ENCODE measurements at regions of chr2 and their contacts with region 1.

Region 1: DNA sequence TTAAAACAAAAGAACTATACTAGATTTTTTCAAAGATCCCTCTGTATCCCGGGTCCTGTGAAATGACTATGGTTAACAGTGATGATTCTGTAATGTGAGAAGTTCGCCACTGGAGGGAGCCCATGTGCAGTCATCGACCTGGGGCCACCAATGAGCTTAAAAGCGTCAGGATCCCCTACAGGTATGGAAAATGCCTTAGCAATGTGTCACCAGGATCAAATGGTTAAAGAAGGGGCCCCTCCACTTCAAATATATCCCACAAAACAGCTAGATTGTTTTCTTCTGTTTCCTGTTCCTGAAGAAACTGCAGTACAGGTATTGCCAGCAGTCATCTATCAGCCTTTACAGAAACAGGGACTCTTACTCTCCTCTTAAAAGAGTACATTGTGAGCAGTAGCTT is 15.3 kb downstream of the CHRNA1 start:
- DNase-seq: peak; percentile 85
- ATAC-seq: peak; percentile 33
- H3K4me3 Mint-ChIP-seq: no peak overlapping the region
- H3K27ac Mint-ChIP-seq: no peak overlapping the region
- H3K4me1 Mint-ChIP-seq: peaks cover 39% of the 10 kb centered on the region
- H3K27me3 Mint-ChIP-seq: peaks cover 2% of the 10 kb centered on the region

Region 2: DNA sequence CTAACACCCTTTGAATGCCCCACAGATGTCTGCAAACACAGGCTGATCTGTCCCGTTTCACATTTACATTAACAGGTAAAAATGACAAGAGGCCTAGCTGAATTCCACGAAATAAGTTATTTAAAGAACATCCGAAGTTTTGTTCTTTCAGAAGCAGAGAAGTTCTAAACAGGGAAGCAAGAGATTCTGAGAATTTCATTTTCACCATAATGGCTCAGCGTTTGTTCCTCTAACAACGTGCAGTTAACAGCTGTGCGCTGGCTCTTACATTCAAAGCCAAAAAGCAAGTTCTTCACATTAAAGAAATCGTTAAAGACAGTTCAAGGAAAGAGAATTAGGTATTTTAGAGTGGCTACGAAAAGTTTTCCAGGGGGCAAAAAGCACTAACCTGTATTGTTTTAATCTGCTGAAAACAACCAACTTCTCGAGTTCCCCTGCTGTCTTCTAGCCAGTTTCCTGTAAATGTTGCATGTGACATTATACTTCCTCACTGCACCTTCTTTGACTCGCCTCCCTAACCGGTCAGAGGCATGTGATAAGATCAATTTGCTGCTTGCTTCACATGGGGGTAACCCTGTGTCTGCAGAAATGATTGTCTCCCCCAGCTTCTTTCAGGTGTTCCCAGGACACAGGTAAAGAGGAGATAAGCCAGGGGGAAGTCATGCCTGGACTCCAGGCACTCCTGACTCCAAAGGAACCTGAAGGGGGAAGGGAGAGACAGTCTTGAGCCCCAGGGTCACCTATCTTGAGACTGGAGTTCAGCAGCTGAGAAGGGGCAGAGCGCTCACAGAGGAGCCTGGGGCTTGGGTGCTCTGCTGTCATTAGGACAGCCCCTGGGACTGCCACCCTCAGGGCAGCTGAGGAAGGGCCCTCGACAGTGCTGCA is 114.6 kb before region 1 on chr2:
- CTCF ChIA-PET with region 1: no interaction called
- POLR2A ChIA-PET with region 1: no interaction called
- intact Hi-C with region 1: loop called in 1 of 2 experiments (anchors 10 kb)
- DNase-seq: peak; percentile 69
- ATAC-seq: peak; percentile 70
- H3K4me3 Mint-ChIP-seq: peak overlapping the region; percentile 92
- H3K27ac Mint-ChIP-seq: peak overlapping the region; percentile 98
- H3K4me1 Mint-ChIP-seq: peaks cover 56% of the 10 kb centered on the region
- H3K27me3 Mint-ChIP-seq: no peaks in the 10 kb centered on the region

Region 3: GRCh38 chr2:174738841-174739240 is 10.1 kb before region 1 on chr2:
- CTCF ChIA-PET with region 1: interaction called, 17 read pairs
- POLR2A ChIA-PET with region 1: no interaction called
- intact Hi-C with region 1: no loop called
- DNase-seq: no peak
- ATAC-seq: no peak
- H3K4me3 Mint-ChIP-seq: no peak overlapping the region
- H3K27ac Mint-ChIP-seq: no peak overlapping the region
- H3K4me1 Mint-ChIP-seq: no peaks in the 10 kb centered on the region
- H3K27me3 Mint-ChIP-seq: peaks cover 3% of the 10 kb centered on the region

Region 4: GRCh38 chr2:174778085-174778981 is 29.4 kb after region 1 on chr2:
- CTCF ChIA-PET with region 1: interaction called, 22 read pairs
- POLR2A ChIA-PET with region 1: no interaction called
- intact Hi-C with region 1: loop called (anchors 1 to 2 kb)
- DNase-seq: peak; percentile 86
- ATAC-seq: peak; percentile 94
- H3K4me3 Mint-ChIP-seq: peak overlapping the region; percentile 13
- H3K27ac Mint-ChIP-seq: peak overlapping the region; percentile 73
- H3K4me1 Mint-ChIP-seq: peaks cover 48% of the 10 kb centered on the region
- H3K27me3 Mint-ChIP-seq: no peaks in the 10 kb centered on the region

Region 5: GRCh38 chr2:174985630-174986029 is 236.7 kb after region 1 on chr2:
- CTCF ChIA-PET with region 1: interaction called, 16 read pairs
- POLR2A ChIA-PET with region 1: interaction called, 3 read pairs
- intact Hi-C with region 1: loop called (anchors 1 to 2 kb)
- DNase-seq: no peak
- ATAC-seq: no peak
- H3K4me3 Mint-ChIP-seq: no peak overlapping the region
- H3K27ac Mint-ChIP-seq: no peak overlapping the region
- H3K4me1 Mint-ChIP-seq: no peaks in the 10 kb centered on the region
- H3K27me3 Mint-ChIP-seq: peaks cover 6% of the 10 kb centered on the region